Common myeloid progenitor, CD34-positive (primary cell): ENCODE measurements at regions of chr1 and their contacts with region 1.

Region 1: DNA sequence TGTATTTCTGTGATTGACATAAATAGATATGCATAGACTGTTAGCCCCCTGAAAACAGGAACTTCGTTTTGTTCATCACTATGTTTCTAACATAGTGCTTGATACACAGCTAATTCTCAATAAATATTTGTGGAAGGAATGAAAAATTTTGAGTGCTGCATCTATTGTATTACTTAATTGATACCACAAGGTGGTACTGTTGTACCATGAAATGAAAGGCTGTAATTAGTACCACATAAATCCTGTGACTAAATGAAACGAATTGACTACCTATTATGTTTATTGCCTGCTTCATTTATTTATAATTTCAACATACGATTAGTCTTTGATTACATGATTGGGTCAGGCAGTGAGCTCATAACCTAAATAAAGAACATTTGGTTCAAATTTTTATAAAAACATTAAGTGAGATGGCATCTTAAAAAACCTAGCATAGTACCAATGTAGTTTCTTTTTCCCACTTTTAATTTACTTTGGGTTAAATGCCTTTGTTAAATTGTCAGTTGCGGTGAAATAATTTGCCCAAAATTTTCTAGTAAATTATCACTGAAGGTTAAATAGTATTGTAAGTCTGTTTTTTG is 15.0 kb upstream of the TGFB2 start:
- DNase-seq: peak in 2 of 3 donors; percentile 67 to 73
- H3K4me3 ChIP-seq: no peak overlapping the region
- H3K27ac ChIP-seq: no peak overlapping the region
- H3K4me1 ChIP-seq: no peaks in the 10 kb centered on the region
- H3K27me3 ChIP-seq: no peaks in the 10 kb centered on the region

Region 2: GRCh38 chr1:217642455-217642854 is 687.7 kb before region 1 on chr1:
- CTCF ChIA-PET with region 1: no interaction called
- POLR2A ChIA-PET with region 1: no interaction called
- DNase-seq: no peak
- H3K4me3 ChIP-seq: no peak overlapping the region
- H3K27ac ChIP-seq: no peak overlapping the region
- H3K4me1 ChIP-seq: no peaks in the 10 kb centered on the region
- H3K27me3 ChIP-seq: peaks cover 0 to 11% (median 2%) of the 10 kb centered on the region in 5 experiments

Region 3: GRCh38 chr1:218209351-218209861 is 120.7 kb before region 1 on chr1:
- CTCF ChIA-PET with region 1: no interaction called
- POLR2A ChIA-PET with region 1: no interaction called
- DNase-seq: no peak
- H3K4me3 ChIP-seq: no peak overlapping the region
- H3K27ac ChIP-seq: no peak overlapping the region
- H3K4me1 ChIP-seq: no peaks in the 10 kb centered on the region
- H3K27me3 ChIP-seq: peaks cover 0 to 5% (median 0%) of the 10 kb centered on the region in 5 experiments

Region 4: GRCh38 chr1:218299416-218299815 is 30.7 kb before region 1 on chr1:
- CTCF ChIA-PET with region 1: interaction called, 13 read pairs
- POLR2A ChIA-PET with region 1: no interaction called
- DNase-seq: peak; percentile 45 to 72 (median 67)
- H3K4me3 ChIP-seq: no peak overlapping the region
- H3K27ac ChIP-seq: no peak overlapping the region
- H3K4me1 ChIP-seq: peaks cover 3 to 8% (median 6%) of the 10 kb centered on the region in 4 experiments
- H3K27me3 ChIP-seq: no peaks in the 10 kb centered on the region

Region 5: DNA sequence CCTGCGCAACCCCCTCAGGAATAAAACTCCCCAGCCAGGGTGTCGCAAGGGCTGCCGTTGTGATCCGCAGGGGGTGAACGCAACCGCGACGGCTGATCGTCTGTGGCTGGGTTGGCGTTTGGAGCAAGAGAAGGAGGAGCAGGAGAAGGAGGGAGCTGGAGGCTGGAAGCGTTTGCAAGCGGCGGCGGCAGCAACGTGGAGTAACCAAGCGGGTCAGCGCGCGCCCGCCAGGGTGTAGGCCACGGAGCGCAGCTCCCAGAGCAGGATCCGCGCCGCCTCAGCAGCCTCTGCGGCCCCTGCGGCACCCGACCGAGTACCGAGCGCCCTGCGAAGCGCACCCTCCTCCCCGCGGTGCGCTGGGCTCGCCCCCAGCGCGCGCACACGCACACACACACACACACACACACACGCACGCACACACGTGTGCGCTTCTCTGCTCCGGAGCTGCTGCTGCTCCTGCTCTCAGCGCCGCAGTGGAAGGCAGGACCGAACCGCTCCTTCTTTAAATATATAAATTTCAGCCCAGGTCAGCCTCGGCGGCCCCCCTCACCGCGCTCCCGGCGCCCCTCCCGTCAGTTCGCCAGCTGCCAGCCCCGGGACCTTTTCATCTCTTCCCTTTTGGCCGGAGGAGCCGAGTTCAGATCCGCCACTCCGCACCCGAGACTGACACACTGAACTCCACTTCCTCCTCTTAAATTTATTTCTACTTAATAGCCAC is 15.7 kb after region 1 on chr1:
- CTCF ChIA-PET with region 1: interaction called, 13 read pairs
- POLR2A ChIA-PET with region 1: no interaction called
- DNase-seq: peak in 2 of 3 donors; percentile 70 to 83
- H3K4me3 ChIP-seq: peak overlapping the region; percentile 60 to 93 (median 77)
- H3K27ac ChIP-seq: no peak overlapping the region
- H3K4me1 ChIP-seq: peaks cover under 1 to 43% (median 42%) of the 10 kb centered on the region in 4 experiments
- H3K27me3 ChIP-seq: no peaks in the 10 kb centered on the region

Region 6: DNA sequence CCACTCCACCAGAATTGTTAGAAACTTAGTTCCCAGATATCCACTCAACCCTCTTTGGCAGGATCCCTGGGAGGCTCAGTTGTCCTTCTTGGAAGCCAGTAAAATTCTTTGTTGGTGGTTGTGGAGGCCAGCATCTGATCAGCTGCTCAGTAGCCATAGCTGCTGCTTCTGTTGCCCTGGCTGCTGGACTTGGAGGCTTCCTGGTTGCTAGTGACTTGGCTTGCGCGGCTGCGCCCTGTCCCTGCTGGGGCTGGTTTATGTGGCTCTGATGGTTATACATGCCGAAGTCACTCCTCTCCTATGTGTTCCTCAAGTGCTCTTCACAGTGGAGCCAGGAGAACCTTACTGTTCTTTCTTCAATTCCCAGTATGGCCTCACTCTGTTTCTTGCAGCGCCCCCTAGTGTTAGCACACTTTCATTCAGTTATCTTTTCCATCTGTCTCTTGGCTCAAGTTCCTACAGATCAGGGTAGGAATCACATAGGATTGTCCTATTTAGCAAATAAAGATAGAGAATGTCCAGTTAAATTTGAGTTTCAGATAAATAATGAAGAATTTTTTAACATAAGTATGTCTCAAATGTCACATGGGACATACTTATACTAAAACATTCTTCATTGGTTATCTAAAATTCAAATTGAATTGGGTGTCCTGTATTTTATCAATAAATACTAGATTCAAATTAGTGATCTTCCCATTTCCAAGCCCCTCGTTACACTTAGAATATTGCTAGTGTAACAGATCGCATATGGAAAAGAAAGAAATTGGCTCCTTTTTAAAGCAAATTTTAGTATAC is 191.4 kb after region 1 on chr1:
- CTCF ChIA-PET with region 1: interaction called, 14 read pairs
- POLR2A ChIA-PET with region 1: no interaction called
- DNase-seq: peak; percentile 55 to 72 (median 61)
- H3K4me3 ChIP-seq: no peak overlapping the region
- H3K27ac ChIP-seq: no peak overlapping the region
- H3K4me1 ChIP-seq: no peaks in the 10 kb centered on the region
- H3K27me3 ChIP-seq: peaks cover 0 to 2% (median 0%) of the 10 kb centered on the region in 5 experiments